Endothelial cell of umbilical vein (primary cell): ENCODE measurements at regions of chr1 and their contacts with region 1.

Region 1: GRCh38 chr1:211654838-211655787 is 20.3 kb downstream of the NEK2 start:
- DNase-seq: peak; percentile 87
- H3K4me3 ChIP-seq: no peak overlapping the region
- H3K27ac ChIP-seq: peak overlapping the region; percentile 80
- H3K4me1 ChIP-seq: peaks cover 20% of the 10 kb centered on the region
- H3K27me3 ChIP-seq: no peaks in the 10 kb centered on the region
- CTCF ChIP-seq: peak; percentile 89 to 96
- POLR2A ChIP-seq: no peak

Region 2: DNA sequence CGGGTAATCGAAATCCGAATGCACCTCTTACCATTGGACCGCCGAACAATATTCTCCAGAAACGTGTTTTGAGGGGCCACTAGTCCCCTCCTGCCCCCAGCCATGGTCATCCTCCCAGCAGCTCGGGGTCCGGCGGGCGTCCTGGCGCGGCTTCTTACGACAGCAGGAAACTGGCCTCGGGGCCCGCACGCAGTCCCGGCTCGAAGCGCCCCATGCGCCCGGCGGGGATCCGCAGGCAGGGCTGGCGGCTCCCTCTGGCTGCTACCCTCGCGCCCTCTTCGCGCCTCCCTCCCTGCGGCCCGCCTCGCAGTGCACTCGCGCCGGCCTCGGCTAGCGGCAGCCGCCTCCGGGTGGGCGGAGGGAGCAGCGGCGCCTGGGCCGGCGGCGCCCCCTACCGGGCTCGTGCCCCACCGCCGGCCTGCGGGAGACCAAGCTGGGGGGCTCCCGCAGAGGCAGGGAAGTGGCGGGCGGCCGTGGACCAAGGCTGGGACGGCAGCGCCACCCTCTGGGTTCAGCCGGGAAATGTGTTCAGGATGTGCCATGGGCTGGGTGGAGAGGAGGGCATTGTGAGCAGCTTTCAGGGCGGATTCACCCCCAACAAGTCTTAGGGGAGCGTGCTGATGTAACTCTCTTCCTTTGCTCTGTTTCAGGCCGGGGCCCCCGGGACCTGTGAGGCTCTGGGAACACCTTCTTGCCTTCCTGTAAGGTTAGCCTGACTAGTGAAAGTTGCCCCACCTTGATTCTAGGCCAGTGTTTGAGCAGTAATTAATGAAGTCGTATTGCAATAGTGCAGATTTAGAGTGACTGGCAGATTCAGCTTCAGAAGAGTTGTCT is 521.1 kb before region 1 on chr1 and contains the start of gene KCNH1:
- CTCF ChIA-PET with region 1: interaction called, 3 read pairs
- POLR2A ChIA-PET with region 1: no interaction called
- dilution Hi-C with region 1: no loop called
- intact Hi-C with region 1: loop called (anchors 5 kb)
- DNase-seq: peak; percentile 77
- H3K4me3 ChIP-seq: peak within 1 kb of the TSS in 1 of 3 experiments; percentile 17
- H3K27ac ChIP-seq: no peak within 1 kb of the TSS
- H3K4me1 ChIP-seq: peaks cover 2% of the 10 kb centered on the region
- H3K27me3 ChIP-seq: peaks cover 11 to 31% of the 10 kb centered on the region in 2 experiments
- CTCF ChIP-seq: peak; percentile 84 to 96
- POLR2A ChIP-seq: no peak
- total RNA-seq, gene KCNH1: not detected in 2 replicates

Region 3: DNA sequence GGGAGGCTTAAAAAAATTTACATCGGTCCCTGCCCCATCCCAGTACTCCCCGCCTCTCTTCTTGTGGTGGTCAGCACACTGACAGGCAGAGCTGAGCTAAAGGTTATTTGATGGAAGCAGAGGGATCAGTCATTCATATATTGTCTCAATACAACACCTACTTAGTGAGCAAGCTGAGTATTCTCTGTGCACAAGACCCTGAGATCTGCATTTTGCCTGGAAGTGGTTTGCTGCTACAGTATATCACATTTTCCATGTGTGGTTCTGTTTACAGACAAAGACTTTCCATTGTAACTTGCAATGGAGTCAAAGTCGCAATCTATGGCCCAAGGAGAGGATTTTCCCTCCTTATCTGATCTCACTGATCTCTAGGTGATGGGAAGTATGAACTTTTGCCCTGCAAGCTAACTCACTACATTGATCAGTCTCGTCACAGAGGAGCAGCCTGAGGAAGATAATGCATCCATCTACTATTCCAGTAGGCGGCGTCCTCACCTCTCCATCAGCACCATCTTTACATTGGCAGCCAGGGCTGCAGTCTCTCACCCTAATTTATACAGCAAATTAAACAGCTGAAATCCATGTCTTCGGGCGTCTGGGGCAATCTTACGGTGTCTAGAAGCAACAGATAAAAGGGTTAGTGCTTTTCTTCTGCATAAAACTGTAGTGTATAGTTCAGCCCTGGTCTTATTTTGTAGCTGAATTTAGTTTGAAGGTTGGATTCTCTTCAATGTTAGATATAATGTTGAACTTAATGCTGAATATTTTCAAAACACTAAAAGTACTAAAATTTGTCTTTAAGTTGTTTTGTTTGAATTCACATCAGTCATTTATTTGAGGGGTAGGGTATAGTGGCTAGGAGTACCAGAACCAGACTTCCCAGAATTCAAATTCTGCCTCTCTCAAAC is 331.7 kb before region 1 on chr1:
- CTCF ChIA-PET with region 1: interaction called, 35 read pairs
- POLR2A ChIA-PET with region 1: no interaction called
- dilution Hi-C with region 1: no loop called
- intact Hi-C with region 1: loop called (anchors 1 kb)
- DNase-seq: peak; percentile 68
- H3K4me3 ChIP-seq: no peak overlapping the region
- H3K27ac ChIP-seq: no peak overlapping the region
- H3K4me1 ChIP-seq: peaks cover 3% of the 10 kb centered on the region
- H3K27me3 ChIP-seq: no peaks in the 10 kb centered on the region
- CTCF ChIP-seq: peak; percentile 79 to 80
- POLR2A ChIP-seq: no peak

Region 4: GRCh38 chr1:211520641-211521040 is 134.5 kb before region 1 on chr1:
- CTCF ChIA-PET with region 1: interaction called, 84 read pairs
- POLR2A ChIA-PET with region 1: no interaction called
- dilution Hi-C with region 1: no loop called
- intact Hi-C with region 1: loop called (anchors 1 kb)
- DNase-seq: peak; percentile 29
- H3K4me3 ChIP-seq: no peak overlapping the region
- H3K27ac ChIP-seq: no peak overlapping the region
- H3K4me1 ChIP-seq: peaks cover 3% of the 10 kb centered on the region
- H3K27me3 ChIP-seq: no peaks in the 10 kb centered on the region
- CTCF ChIP-seq: peak in 1 of 2 donors; percentile 32
- POLR2A ChIP-seq: no peak

Region 5: GRCh38 chr1:211613093-211613947 is 41.8 kb before region 1 on chr1:
- CTCF ChIA-PET with region 1: no interaction called
- POLR2A ChIA-PET with region 1: no interaction called
- dilution Hi-C with region 1: no loop called
- intact Hi-C with region 1: no loop called
- DNase-seq: no peak
- H3K4me3 ChIP-seq: no peak overlapping the region
- H3K27ac ChIP-seq: no peak overlapping the region
- H3K4me1 ChIP-seq: peaks cover 5% of the 10 kb centered on the region
- H3K27me3 ChIP-seq: no peaks in the 10 kb centered on the region
- CTCF ChIP-seq: no peak
- POLR2A ChIP-seq: no peak

Region 6: GRCh38 chr1:211625040-211625439 is 30.1 kb before region 1 on chr1:
- CTCF ChIA-PET with region 1: interaction called, 5 read pairs
- POLR2A ChIA-PET with region 1: no interaction called
- dilution Hi-C with region 1: no loop called
- intact Hi-C with region 1: loop called (anchors 1 kb)
- DNase-seq: no peak
- H3K4me3 ChIP-seq: no peak overlapping the region
- H3K27ac ChIP-seq: no peak overlapping the region
- H3K4me1 ChIP-seq: peaks cover 2% of the 10 kb centered on the region
- H3K27me3 ChIP-seq: no peaks in the 10 kb centered on the region
- CTCF ChIP-seq: no peak
- POLR2A ChIP-seq: no peak

Region 7: DNA sequence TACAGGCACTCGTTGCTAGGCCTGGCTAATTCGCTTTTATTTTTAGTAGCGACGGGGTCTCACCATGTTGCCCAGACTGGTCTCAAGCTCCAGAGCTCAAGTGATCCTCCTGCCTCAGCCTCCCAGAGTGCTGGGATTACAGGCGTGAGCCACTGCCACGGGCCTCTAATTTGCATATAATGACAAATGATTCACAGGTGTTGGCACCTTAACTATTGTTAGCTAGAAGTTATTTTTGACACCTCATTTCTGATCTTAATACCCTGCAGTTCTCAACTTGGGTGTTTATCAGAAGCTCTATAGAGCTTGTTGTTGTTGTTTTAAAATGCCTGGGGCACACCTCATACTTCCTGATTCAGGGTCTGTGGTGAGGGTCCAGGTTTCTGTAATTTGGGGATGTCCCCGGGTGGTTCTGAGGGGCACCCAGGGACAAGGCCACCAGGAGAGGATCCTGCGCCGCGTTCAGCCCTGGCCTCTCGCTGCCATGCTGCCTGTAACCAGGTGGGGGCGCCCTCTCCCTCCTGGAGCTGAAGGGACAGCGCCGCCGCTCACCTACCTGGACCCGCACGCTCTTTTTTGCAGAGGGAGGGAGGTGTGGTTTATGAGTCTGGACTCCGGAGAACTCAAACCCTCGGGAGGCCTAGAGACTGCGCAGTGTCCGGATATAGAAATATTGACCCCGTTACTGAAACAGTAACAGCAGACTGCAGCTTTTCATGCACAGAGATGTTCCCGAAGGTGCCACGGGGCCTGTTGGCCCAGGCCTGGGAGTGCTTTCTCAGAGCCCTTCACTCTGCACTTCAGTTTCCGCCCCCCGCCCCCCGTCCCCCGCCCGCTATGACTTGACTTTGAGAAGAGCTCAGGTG is 43.3 kb after region 1 on chr1:
- CTCF ChIA-PET with region 1: no interaction called
- POLR2A ChIA-PET with region 1: no interaction called
- dilution Hi-C with region 1: no loop called
- intact Hi-C with region 1: no loop called
- DNase-seq: peak; percentile 60
- H3K4me3 ChIP-seq: no peak overlapping the region
- H3K27ac ChIP-seq: no peak overlapping the region
- H3K4me1 ChIP-seq: no peaks in the 10 kb centered on the region
- H3K27me3 ChIP-seq: peaks cover 10 to 11% of the 10 kb centered on the region in 2 experiments
- CTCF ChIP-seq: peak; percentile 96 to 98
- POLR2A ChIP-seq: no peak